Sciatic nerve (tissue), 2 donors: ENCODE measurements at regions of chr9 and their contacts with region 1.

Region 1: GRCh38 chr9:10094563-10094962 is 518.2 kb downstream of the PTPRD start:
- DNase-seq: no peak
- ATAC-seq: no peak

Region 2: DNA sequence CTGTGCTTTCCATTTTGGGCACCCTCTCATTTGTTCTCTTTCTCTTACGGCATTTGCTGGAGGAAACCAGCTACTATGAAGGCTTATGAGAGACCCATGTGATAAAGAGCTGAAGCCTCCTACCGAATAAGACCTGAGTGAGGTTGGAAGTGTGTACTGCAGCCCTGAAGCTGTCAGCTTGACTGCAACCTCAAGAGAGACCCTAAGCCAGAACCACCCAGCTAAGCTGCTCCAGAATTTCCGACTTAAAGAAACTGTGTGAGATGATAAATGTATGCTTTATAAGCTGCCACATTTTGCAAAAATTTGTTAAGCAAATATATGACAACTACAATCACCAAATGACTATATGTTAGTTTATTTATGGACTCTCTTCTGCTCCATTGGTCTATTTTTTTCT is 669.9 kb after region 1 on chr9:
- intact Hi-C with region 1: loop called (anchors 10 kb)
- DNase-seq: no peak
- ATAC-seq: no peak